ENCODE measurements at regions of chr12 and their contacts with region 1.

Region 1: DNA sequence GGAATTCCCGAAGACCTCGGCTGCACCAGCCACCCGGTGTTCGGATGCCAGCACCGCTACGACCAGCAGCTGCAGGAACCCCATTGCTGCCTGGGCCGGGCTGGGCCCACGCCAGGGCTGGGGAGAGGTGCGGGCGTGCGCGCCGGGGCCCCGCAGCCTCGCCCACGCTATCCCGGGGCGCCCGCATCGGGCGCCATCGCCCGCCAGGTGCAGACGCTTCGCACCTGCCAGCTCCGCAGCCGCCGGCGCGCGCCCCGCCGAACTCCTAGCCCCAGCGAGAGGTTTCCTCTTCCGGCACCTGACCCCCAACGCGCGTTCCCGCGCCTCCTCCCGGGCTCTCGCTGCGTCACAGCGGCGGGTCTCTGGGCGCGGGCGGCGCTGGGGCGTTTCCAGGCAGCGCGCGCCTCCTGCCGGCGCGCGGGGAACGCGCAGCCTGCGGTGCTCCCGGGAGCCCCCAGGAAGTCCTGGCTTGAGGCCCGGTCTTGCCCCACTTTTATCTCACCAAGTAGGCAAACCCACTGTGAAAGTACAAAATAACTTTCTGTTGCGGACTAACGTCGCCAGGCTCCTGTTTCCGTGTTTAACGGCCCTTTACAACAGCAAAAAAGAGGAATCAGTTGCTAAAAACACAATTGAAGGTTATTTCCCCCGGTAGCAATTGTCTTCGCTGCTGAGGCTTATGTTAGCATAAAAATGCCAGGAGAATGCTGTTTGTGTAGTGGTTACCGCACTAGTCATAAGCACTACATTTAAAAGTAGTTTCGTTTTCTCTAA is at the start of gene TM7SF3:
- DNase-seq: peak; percentile 96
- ATAC-seq: peak; percentile 92
- H3K4me3 Mint-ChIP-seq: peak within 1 kb of the TSS; percentile 91
- H3K27ac Mint-ChIP-seq: peak within 1 kb of the TSS; percentile 94
- H3K4me1 Mint-ChIP-seq: peaks cover 49% of the 10 kb centered on the region
- H3K27me3 Mint-ChIP-seq: no peaks in the 10 kb centered on the region
- CTCF ChIP-seq: peak; percentile 33
- total RNA-seq, gene TM7SF3: 20.7 and 30.5 TPM in 2 replicates

Region 2: GRCh38 chr12:26113853-26114719 is 900.2 kb before region 1 on chr12:
- CTCF ChIA-PET with region 1: interaction called, 3 read pairs
- POLR2A ChIA-PET with region 1: no interaction called
- intact Hi-C with region 1: loop called (anchors 5 kb)
- DNase-seq: peak; percentile 77
- ATAC-seq: peak; percentile 80
- H3K4me3 Mint-ChIP-seq: peak overlapping the region; percentile 85
- H3K27ac Mint-ChIP-seq: peak overlapping the region; percentile 92
- H3K4me1 Mint-ChIP-seq: peaks cover 58% of the 10 kb centered on the region
- H3K27me3 Mint-ChIP-seq: no peaks in the 10 kb centered on the region
- CTCF ChIP-seq: no peak

Region 3: GRCh38 chr12:26832822-26833742 is 181.2 kb before region 1 on chr12 and contains the start of gene ITPR2:
- CTCF ChIA-PET with region 1: interaction called, 4 read pairs
- POLR2A ChIA-PET with region 1: interaction called, 25 read pairs
- intact Hi-C with region 1: loop called (anchors 1 kb)
- DNase-seq: peak; percentile 94
- ATAC-seq: peak; percentile 89
- H3K4me3 Mint-ChIP-seq: peak within 1 kb of the TSS; percentile 96
- H3K27ac Mint-ChIP-seq: peak within 1 kb of the TSS; percentile 99
- H3K4me1 Mint-ChIP-seq: peaks cover 45% of the 10 kb centered on the region
- H3K27me3 Mint-ChIP-seq: no peaks in the 10 kb centered on the region
- CTCF ChIP-seq: no peak
- total RNA-seq, gene ITPR2: 66.3 and 74.5 TPM in 2 replicates

Region 4: DNA sequence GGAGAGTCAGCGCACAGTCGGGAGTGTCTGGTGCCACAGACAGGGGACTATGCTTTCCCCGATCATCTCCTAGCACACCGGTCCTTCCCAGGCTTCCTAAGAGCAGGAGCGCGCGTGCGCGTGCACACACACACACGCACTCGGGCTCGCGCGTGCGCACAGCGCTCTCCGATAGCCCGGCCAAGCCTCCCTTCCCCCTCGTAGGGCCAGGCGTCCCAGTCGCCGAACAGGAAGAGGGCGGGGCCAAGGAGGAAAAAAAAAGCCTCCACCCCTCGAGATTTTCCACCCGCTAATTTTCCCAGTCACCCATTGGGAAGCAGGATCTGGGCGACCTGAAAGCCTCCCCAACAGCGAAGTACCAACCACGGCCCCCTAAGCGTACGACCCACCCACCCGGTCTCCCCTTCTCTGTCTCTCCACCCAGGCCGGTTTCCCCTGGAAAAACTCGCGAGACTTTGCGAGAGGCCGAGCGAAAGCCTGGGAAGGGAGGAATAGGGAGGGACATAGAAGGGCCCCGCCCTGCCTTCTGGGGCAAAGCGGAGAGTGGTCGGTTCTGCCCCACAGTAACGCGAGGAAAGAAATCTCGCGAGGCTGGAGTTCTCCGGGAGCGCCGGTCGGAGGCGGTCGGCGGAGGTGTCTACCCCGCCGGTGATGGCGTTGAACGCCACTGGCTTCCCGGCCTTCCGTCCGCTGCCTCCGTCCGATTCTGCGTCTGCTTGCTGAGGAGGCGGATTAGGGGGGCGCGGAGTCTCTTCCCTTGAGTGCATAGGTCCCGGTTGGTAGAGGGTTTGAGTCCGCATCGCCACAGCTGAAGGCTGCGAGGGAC is 76.2 kb before region 1 on chr12 and contains the starts of genes FGFR1OP2 and INTS13:
- CTCF ChIA-PET with region 1: interaction called, 3 read pairs
- POLR2A ChIA-PET with region 1: interaction called, 5 read pairs
- intact Hi-C with region 1: loop called (anchors 1 kb)
- DNase-seq: peak; percentile 89
- ATAC-seq: peak; percentile 92
- H3K4me3 Mint-ChIP-seq: peak within 1 kb of the TSS; percentile 99
- H3K27ac Mint-ChIP-seq: peak within 1 kb of the TSS; percentile 99
- H3K4me1 Mint-ChIP-seq: peaks cover 73% of the 10 kb centered on the region
- H3K27me3 Mint-ChIP-seq: no peaks in the 10 kb centered on the region
- CTCF ChIP-seq: no peak
- total RNA-seq, gene FGFR1OP2: 42.7 and 45.0 TPM in 2 replicates
- total RNA-seq, gene INTS13: 25.0 and 25.2 TPM in 2 replicates

Region 5: DNA sequence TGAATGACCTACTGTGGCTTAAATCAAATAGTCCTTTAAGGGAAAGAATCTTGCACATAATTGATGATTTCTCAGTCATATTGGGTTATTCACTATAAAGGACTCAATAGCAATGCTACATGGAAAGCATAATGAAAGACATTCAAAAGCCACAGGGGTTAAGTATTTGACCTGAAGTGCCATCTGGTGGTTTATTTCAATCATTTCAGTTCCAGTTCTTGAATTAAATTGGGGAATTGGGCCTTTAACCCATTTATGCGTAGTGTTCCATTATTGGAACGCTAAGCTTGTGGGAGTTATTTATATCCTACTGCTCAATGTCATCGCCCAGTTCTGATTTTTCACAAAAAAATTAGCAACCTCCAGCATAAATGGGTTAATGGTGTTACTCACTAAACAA is 109.4 kb after region 1 on chr12:
- CTCF ChIA-PET with region 1: interaction called, 15 read pairs
- POLR2A ChIA-PET with region 1: no interaction called
- intact Hi-C with region 1: loop called (anchors 1 kb)
- DNase-seq: no peak
- ATAC-seq: no peak
- H3K4me3 Mint-ChIP-seq: no peak overlapping the region
- H3K27ac Mint-ChIP-seq: no peak overlapping the region
- H3K4me1 Mint-ChIP-seq: no peaks in the 10 kb centered on the region
- H3K27me3 Mint-ChIP-seq: no peaks in the 10 kb centered on the region
- CTCF ChIP-seq: no peak

Region 6: GRCh38 chr12:27305673-27306456 is 291.6 kb after region 1 on chr12:
- CTCF ChIA-PET with region 1: interaction called, 58 read pairs
- POLR2A ChIA-PET with region 1: interaction called, 9 read pairs
- intact Hi-C with region 1: loop called (anchors 1 kb)
- DNase-seq: no peak
- ATAC-seq: peak; percentile 34
- H3K4me3 Mint-ChIP-seq: no peak overlapping the region
- H3K27ac Mint-ChIP-seq: no peak overlapping the region
- H3K4me1 Mint-ChIP-seq: no peaks in the 10 kb centered on the region
- H3K27me3 Mint-ChIP-seq: no peaks in the 10 kb centered on the region
- CTCF ChIP-seq: peak; percentile 49

Measured in activated B cell treated with CpG ODN at 0.5 μM for 24 hours (primary cell).